ENCODE measurements at regions of chr6 and their contacts with region 1.

Region 1: DNA sequence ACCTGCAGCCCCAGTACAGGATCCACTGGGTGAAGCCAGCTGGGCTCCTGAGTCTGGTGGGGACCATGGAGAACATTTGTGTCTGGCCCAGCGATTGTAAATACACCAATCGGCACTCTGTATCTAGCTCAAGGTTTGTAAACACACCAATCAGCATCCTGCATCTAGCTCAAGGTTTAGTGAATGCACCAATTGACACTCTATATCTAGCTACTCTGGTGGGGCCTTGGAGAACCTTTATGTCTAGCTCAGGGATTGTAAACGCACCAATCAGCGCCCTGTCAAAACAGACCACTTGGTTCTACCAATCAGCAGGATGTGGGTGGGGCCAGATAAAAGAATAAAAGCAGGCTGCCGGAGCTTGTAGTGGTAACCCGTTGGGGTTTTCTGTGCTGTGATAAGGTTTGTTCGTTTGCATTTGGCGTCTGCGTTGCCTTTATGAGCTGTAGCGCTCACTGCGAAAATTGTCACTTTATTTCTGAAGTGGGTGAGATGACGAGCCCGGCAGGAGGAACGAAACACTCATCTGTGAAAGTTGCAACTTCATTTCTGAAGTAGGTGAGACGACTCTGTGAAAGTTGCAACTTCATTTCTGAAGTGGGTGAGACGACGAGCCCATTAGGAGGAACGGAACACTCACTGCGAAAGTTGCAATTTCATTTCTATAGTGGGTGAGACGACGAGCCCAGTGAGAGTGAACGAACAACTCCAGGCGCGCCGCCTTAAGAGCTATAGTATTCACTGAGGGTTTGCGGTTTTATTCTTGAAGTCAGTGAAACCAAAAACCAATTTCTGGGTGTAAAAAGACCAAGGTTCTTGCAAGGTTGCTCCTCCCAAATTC is 31.1 kb downstream of the SERPINB6 start:
- DNase-seq: peak in 8 of 9 donors; percentile 70 to 90 (median 82)
- ATAC-seq: peak; percentile 81
- H3K4me3 ChIP-seq: peak overlapping the region; percentile 72
- H3K4me3 Mint-ChIP-seq: peak overlapping the region; percentile 81 to 94 (median 88)
- H3K27ac ChIP-seq: peak overlapping the region; percentile 81
- H3K27ac Mint-ChIP-seq: peak overlapping the region; percentile 93 to 100 (median 97)
- H3K4me1 ChIP-seq: peaks cover 27 to 76% of the 10 kb centered on the region in 2 donors
- H3K4me1 Mint-ChIP-seq: peaks cover 33 to 88% (median 79%) of the 10 kb centered on the region in 7 donors
- H3K27me3 ChIP-seq: no peaks in the 10 kb centered on the region
- H3K27me3 Mint-ChIP-seq: peaks cover 0 to 22% (median 0%) of the 10 kb centered on the region in 5 donors

Region 2: DNA sequence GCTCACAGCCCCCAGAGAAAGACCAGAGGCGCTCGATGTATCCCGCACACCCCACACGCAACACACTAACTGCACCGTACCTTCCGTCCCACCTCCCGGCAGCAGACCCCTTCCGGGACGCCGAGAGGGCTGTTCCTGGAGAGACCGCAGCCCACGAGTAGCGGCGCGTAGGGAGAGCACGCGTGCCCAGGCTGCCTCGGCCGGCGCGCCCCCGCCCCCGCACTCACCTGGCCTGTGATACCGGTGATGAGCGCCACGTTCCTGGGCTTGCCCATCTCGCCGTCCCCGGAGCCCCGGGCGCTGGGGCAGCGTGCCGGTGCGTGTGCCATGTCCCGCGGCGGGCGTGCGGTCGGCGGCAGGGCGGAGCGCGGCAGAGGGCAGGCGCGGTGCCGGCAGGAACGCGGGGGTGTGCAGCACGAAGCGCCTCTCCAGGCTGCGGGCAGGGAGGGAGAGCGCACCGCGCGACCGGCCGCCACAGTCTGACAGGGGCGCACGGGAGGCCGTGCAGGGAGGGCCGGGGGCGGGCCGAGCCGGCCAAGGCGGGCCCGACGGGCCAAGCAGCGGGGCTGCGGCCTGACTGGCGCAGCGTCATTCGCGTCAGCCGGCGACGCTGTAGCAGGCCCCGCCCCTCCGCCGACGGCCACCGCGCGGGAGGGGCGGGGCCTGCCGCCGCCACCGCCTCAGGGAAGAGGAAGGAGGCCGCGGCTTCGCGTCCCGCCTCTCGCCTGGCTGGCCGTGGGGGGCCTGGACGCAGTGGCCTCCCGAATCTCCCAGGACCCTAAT is 694.9 kb before region 1 on chr6 and contains the start of gene GMDS:
- CTCF ChIA-PET with region 1: no interaction called
- POLR2A ChIA-PET with region 1: no interaction called
- intact Hi-C with region 1: no loop called
- DNase-seq: peak; percentile 67 to 86 (median 79)
- ATAC-seq: peak; percentile 98
- H3K4me3 ChIP-seq: peak within 1 kb of the TSS; percentile 90
- H3K4me3 Mint-ChIP-seq: peak within 1 kb of the TSS; percentile 86 to 97 (median 93)
- H3K27ac ChIP-seq: peak within 1 kb of the TSS; percentile 96
- H3K27ac Mint-ChIP-seq: peak within 1 kb of the TSS; percentile 84 to 98 (median 95)
- H3K4me1 ChIP-seq: peaks cover 15 to 18% of the 10 kb centered on the region in 2 donors
- H3K4me1 Mint-ChIP-seq: peaks cover 41 to 77% (median 61%) of the 10 kb centered on the region in 7 donors
- H3K27me3 ChIP-seq: no peaks in the 10 kb centered on the region
- H3K27me3 Mint-ChIP-seq: no peaks in the 10 kb centered on the region
- total RNA-seq, gene GMDS: 12.7 to 33.9 (median 18.3) TPM

Region 3: DNA sequence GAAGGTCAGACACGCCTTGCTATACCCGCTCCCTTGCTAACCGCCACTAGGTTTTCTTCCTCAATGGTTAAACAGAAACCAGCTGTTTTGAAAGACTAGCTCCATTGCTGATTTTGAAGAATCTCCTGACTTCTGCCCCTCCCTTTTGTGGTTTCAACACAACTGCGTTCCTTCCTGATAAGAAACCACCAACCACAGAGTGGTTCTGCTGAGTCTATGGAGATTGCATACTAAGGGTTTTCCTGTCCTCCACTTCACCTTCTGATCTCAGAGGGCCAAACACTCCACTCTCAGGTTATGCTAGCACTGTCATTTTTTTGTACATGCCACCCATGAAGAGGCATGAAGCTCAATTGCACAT is 397.4 kb before region 1 on chr6:
- CTCF ChIA-PET with region 1: no interaction called
- POLR2A ChIA-PET with region 1: no interaction called
- intact Hi-C with region 1: loop called in 1 of 2 experiments (anchors 5 kb)
- DNase-seq: peak in 8 of 9 donors; percentile 20 to 64 (median 49)
- ATAC-seq: peak; percentile 87
- H3K4me3 ChIP-seq: peak overlapping the region; percentile 14
- H3K4me3 Mint-ChIP-seq: peak overlapping the region; percentile 18 to 73 (median 53)
- H3K27ac ChIP-seq: no peak overlapping the region
- H3K27ac Mint-ChIP-seq: peak overlapping the region in 3 of 9 donors; percentile 1 to 61 (median 15)
- H3K4me1 ChIP-seq: peaks cover 16 to 20% of the 10 kb centered on the region in 2 donors
- H3K4me1 Mint-ChIP-seq: peaks cover 17 to 35% (median 25%) of the 10 kb centered on the region in 7 donors
- H3K27me3 ChIP-seq: peaks cover 0 to 4% of the 10 kb centered on the region in 2 donors
- H3K27me3 Mint-ChIP-seq: peaks cover 57 to 77% (median 63%) of the 10 kb centered on the region in 5 donors

Region 4: DNA sequence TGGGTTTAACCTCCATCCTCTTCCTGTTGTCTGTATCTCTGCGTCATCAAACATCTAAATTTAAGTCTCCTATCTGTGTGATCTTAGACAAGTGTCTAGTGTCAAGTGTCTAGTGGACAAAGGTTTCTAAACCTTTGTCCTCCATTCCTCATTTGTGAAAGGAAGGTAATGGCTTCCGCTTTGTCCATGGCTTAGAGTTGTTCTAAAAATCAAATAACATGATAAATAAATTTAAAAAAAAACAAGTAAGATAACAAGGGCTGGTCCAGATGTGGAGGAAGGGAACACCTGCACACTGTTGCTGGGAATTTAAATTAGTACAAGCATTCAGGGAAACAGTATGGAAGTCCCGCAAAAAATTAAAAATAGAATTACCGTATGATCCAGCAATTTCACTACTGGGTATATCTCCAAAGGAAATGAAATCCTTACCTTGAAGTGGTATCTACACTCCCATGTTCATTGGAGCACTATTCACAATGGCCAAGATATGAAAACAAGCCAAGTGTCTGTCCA is 81.0 kb before region 1 on chr6:
- CTCF ChIA-PET with region 1: no interaction called
- POLR2A ChIA-PET with region 1: interaction called, 21 read pairs
- intact Hi-C with region 1: loop called in 1 of 2 experiments (anchors 1 kb)
- DNase-seq: peak in 5 of 9 donors; percentile 78 to 84 (median 80)
- ATAC-seq: no peak
- H3K4me3 ChIP-seq: peak overlapping the region; percentile 56
- H3K4me3 Mint-ChIP-seq: peak overlapping the region; percentile 79 to 98 (median 88)
- H3K27ac ChIP-seq: peak overlapping the region; percentile 86
- H3K27ac Mint-ChIP-seq: peak overlapping the region; percentile 98 to 100 (median 99)
- H3K4me1 ChIP-seq: peaks cover 81 to 84% of the 10 kb centered on the region in 2 donors
- H3K4me1 Mint-ChIP-seq: peaks cover 66 to 95% (median 89%) of the 10 kb centered on the region in 7 donors
- H3K27me3 ChIP-seq: no peaks in the 10 kb centered on the region
- H3K27me3 Mint-ChIP-seq: no peaks in the 10 kb centered on the region

Region 5: GRCh38 chr6:2952557-2953095 is 12.4 kb after region 1 on chr6:
- CTCF ChIA-PET with region 1: interaction called, 5 read pairs
- POLR2A ChIA-PET with region 1: interaction called, 14 read pairs
- intact Hi-C with region 1: loop called (anchors 1 kb)
- DNase-seq: peak in 4 of 9 donors; percentile 10 to 61 (median 54)
- ATAC-seq: peak; percentile 96
- H3K4me3 ChIP-seq: no peak overlapping the region
- H3K4me3 Mint-ChIP-seq: peak overlapping the region in 3 of 10 donors; percentile 53 to 65 (median 64)
- H3K27ac ChIP-seq: no peak overlapping the region
- H3K27ac Mint-ChIP-seq: peak overlapping the region in 4 of 9 donors; percentile 34 to 87 (median 68)
- H3K4me1 ChIP-seq: peaks cover 0 to 2% of the 10 kb centered on the region in 2 donors
- H3K4me1 Mint-ChIP-seq: peaks cover 10 to 31% (median 16%) of the 10 kb centered on the region in 7 donors
- H3K27me3 ChIP-seq: no peaks in the 10 kb centered on the region
- H3K27me3 Mint-ChIP-seq: peaks cover 0 to 12% (median 0%) of the 10 kb centered on the region in 5 donors

Region 6: DNA sequence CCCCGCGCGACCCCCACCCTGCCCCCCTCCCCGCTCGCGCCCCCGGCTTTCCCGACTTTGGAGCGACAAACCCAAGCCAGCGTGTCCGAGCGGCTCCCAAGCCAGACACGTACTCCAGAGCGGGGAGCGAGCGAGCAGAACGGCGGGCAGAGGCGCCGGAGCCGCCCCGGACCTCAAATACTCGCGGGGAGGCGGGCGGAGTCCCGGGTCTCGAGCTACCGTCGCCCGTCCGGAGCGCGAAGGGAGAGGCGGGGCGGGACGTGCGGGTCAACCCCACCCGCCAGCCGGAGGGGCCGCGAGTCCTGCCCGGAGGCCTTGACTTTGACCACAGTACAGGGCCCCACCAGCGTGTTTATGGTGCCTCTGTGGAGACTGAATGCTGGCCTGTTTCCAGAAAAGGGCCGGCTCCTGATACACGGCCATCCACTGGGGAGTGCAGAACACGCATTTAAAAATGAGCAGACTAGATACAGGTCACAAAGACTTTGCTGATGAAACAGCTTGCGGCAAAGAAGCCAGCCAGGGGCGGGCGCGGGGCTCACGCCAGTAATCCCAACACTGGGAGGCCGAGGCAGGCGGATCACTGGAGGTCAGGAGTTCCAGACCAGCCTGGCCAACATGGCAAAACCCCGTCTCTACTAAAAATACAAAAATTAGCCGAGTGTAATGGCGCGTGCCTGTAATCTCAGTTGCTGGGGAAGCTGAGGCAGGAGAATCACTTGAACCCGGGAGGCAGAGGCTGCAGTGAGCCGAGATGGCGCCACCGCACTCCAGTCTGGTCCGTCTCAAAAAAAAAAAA is 31.4 kb after region 1 on chr6 and contains the start of gene SERPINB6:
- CTCF ChIA-PET with region 1: interaction called, 4 read pairs
- POLR2A ChIA-PET with region 1: interaction called, 33 read pairs
- intact Hi-C with region 1: loop called (anchors 1 to 2 kb)
- DNase-seq: peak in 8 of 9 donors; percentile 31 to 57 (median 44)
- ATAC-seq: peak; percentile 70
- H3K4me3 ChIP-seq: peak within 1 kb of the TSS; percentile 66
- H3K4me3 Mint-ChIP-seq: peak within 1 kb of the TSS; percentile 83 to 94 (median 91)
- H3K27ac ChIP-seq: peak within 1 kb of the TSS; percentile 72
- H3K27ac Mint-ChIP-seq: peak within 1 kb of the TSS; percentile 77 to 95 (median 93)
- H3K4me1 ChIP-seq: peaks cover 7 to 19% of the 10 kb centered on the region in 2 donors
- H3K4me1 Mint-ChIP-seq: peaks cover 14 to 62% (median 48%) of the 10 kb centered on the region in 7 donors
- H3K27me3 ChIP-seq: no peaks in the 10 kb centered on the region
- H3K27me3 Mint-ChIP-seq: peaks cover 0 to 66% (median 0%) of the 10 kb centered on the region in 5 donors
- total RNA-seq, gene SERPINB6: 19.7 to 60.5 (median 56.4) TPM